ENCODE measurements at regions of chr2 and their contacts with region 1.

Region 1: GRCh38 chr2:54838585-54839035 is 115.1 kb downstream of the EML6 start:
- DNase-seq: peak in 4 of 5 donors; percentile 51 to 64 (median 60)
- ATAC-seq: peak; percentile 73 to 90 (median 80)
- H3K4me3 ChIP-seq: no peak overlapping the region
- H3K27ac ChIP-seq: no peak overlapping the region
- H3K4me1 ChIP-seq: peaks cover 0 to 3% (median 0%) of the 10 kb centered on the region in 12 donors
- H3K27me3 ChIP-seq: no peaks in the 10 kb centered on the region
- CTCF ChIP-seq: peak; percentile 79 to 96 (median 92)
- POLR2A ChIP-seq: no peak

Region 2: GRCh38 chr2:54161660-54162424 is 676.8 kb before region 1 on chr2:
- intact Hi-C with region 1: loop called in 2 of 10 experiments (anchors 10 kb)
- DNase-seq: no peak
- ATAC-seq: no peak
- H3K4me3 ChIP-seq: no peak overlapping the region
- H3K27ac ChIP-seq: no peak overlapping the region
- H3K4me1 ChIP-seq: peaks cover 0 to 9% (median 0%) of the 10 kb centered on the region in 12 donors
- H3K27me3 ChIP-seq: no peaks in the 10 kb centered on the region
- CTCF ChIP-seq: peak in 4 of 12 donors; percentile 13 to 35 (median 33)
- POLR2A ChIP-seq: no peak

Region 3: DNA sequence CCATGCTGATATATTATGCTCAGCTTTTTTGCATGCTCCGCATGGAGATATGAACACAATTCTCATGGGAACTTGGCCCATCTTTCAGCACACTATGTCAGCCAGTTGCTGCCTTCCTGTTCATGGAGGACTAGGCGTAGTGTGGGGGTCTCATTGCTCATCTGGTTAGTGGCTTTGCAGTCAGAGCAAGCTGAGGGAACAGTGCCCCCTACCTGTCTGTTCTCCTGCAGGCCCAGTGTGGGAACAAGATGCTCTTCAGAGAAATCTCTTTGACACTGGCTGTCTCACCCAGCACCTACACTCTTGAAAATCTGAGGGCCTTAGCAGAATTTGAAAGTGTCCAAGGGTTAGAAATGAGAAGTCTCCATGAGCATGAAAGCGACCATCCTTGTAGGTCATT is 335.4 kb before region 1 on chr2:
- intact Hi-C with region 1: loop called in 1 of 10 experiments (anchors 10 kb)
- DNase-seq: peak in 1 of 5 donors; percentile 35
- ATAC-seq: peak in 2 of 4 donors; percentile 30 to 41
- H3K4me3 ChIP-seq: no peak overlapping the region
- H3K27ac ChIP-seq: peak overlapping the region in 7 of 12 donors; percentile 2 to 59 (median 31)
- H3K4me1 ChIP-seq: peaks cover 42 to 100% (median 96%) of the 10 kb centered on the region in 12 donors
- H3K27me3 ChIP-seq: no peaks in the 10 kb centered on the region
- CTCF ChIP-seq: peak; percentile 22 to 58 (median 43)
- POLR2A ChIP-seq: no peak

Region 4: DNA sequence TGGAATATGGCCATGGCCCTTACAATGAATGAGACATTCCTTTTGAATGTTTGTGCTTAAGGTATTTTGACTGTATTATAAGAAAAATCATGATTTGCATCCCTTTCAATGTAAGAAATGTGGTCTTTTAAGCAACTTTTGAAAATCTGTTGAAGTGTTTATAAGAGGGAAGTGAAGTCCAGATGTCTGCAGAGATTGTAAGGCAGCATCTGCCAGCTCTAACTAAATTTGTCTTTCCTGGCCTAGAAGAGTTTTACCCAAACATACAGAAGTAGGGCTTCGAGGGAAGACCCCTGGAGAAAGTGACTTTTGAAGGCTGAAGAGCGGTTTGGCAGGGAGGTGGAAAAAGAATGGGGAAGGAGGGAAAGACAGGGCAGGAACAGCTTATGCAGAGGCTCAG is 103.0 kb before region 1 on chr2:
- intact Hi-C with region 1: loop called in 1 of 10 experiments (anchors 10 kb)
- DNase-seq: no peak
- ATAC-seq: no peak
- H3K4me3 ChIP-seq: no peak overlapping the region
- H3K27ac ChIP-seq: no peak overlapping the region
- H3K4me1 ChIP-seq: no peaks in the 10 kb centered on the region
- H3K27me3 ChIP-seq: no peaks in the 10 kb centered on the region
- CTCF ChIP-seq: no peak
- POLR2A ChIP-seq: no peak

Region 5: DNA sequence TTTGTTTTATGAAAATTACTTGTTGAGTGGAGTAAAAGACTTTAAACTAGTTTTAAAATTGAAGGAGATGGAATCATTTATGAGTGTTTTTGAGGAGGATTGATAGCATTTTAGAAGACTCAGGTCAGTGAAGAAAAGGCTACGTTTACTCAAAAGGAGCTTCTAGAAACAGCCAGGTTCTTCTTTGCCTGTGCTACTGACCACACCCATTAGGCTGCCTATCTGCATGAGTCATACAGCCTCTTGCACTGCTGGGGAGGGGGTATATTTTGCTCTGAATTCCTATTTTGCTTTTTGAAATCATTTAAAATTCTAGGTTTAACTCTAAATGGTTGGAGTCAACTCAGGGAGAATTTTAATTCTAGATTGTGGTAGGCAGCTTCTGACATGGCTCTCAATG is 1062.7 kb after region 1 on chr2:
- intact Hi-C with region 1: no loop called
- DNase-seq: no peak
- ATAC-seq: no peak
- H3K4me3 ChIP-seq: no peak overlapping the region
- H3K27ac ChIP-seq: no peak overlapping the region
- H3K4me1 ChIP-seq: peaks cover 0 to 7% (median 0%) of the 10 kb centered on the region in 12 donors
- H3K27me3 ChIP-seq: no peaks in the 10 kb centered on the region
- CTCF ChIP-seq: no peak
- POLR2A ChIP-seq: no peak